BJ (cell line): ENCODE measurements at regions of chr1 and their contacts with region 1.

Region 1: GRCh38 chr1:147640553-147641165 is 29.7 kb downstream of the ACP6 start:
- DNase-seq: peak; percentile 13
- H3K4me3 ChIP-seq: no peak overlapping the region
- H3K27me3 ChIP-seq: no peaks in the 10 kb centered on the region
- CTCF ChIP-seq: peak; percentile 97

Region 2: DNA sequence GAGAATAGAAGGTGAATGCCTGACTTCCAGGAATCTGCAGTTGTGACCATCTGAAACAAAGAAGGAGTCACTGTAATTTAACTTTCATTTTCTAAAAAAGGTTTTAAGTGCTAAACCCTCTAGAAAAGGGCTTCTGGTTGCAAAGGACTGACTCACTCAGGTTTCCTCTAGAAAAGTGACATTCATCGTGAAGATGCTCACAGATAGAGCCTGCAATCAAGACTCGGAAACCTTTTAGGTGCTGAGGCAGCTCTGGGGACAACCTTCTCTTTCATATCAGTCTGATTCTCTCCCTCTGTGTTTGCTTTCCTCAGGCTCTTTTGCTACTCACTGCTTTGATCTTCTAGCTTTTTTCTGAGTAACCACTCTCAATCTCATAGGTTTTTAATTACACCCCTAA is 91.1 kb before region 1 on chr1:
- CTCF ChIA-PET with region 1: no interaction called
- POLR2A ChIA-PET with region 1: no interaction called
- DNase-seq: no peak
- H3K4me3 ChIP-seq: no peak overlapping the region
- H3K27me3 ChIP-seq: no peaks in the 10 kb centered on the region
- CTCF ChIP-seq: no peak

Region 3: DNA sequence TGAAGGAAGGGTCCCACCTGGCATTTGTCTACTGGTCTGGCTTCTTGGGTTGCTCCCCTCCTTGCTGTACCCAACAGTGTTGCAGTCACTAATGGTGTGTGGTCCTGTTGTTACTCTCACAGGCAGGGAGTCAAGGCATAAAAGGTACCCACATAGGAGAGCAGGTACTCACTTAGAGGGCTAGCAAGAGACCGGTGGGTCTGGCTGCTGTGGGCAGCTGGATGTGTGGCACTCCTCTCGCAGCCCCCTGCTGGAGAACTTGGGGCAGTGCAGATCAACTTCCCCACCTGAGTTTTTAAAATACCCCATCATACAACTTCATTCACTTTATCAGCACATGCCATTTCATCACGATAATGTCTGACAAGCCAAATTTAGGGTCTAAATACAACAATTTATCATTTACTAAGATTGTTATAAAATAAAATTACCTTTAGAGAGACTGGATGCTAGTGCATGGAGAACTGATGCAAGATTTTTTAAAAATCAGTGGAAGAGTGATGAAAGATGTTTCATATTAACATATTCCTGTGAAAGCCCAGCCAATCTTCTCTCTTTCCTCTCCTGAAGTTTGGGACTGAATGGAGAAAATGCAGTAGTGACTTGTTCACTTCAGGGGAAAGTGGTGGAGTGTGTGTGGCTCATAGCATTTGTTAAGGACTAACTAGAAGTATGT is 13.1 kb before region 1 on chr1:
- CTCF ChIA-PET with region 1: interaction called, 26 read pairs
- POLR2A ChIA-PET with region 1: no interaction called
- DNase-seq: no peak
- H3K4me3 ChIP-seq: no peak overlapping the region
- H3K27me3 ChIP-seq: no peaks in the 10 kb centered on the region
- CTCF ChIP-seq: peak; percentile 96

Region 4: GRCh38 chr1:147651213-147651865 is 10.7 kb after region 1 on chr1:
- CTCF ChIA-PET with region 1: interaction called, 13 read pairs
- POLR2A ChIA-PET with region 1: no interaction called
- DNase-seq: no peak
- H3K4me3 ChIP-seq: no peak overlapping the region
- H3K27me3 ChIP-seq: no peaks in the 10 kb centered on the region
- CTCF ChIP-seq: no peak

Region 5: DNA sequence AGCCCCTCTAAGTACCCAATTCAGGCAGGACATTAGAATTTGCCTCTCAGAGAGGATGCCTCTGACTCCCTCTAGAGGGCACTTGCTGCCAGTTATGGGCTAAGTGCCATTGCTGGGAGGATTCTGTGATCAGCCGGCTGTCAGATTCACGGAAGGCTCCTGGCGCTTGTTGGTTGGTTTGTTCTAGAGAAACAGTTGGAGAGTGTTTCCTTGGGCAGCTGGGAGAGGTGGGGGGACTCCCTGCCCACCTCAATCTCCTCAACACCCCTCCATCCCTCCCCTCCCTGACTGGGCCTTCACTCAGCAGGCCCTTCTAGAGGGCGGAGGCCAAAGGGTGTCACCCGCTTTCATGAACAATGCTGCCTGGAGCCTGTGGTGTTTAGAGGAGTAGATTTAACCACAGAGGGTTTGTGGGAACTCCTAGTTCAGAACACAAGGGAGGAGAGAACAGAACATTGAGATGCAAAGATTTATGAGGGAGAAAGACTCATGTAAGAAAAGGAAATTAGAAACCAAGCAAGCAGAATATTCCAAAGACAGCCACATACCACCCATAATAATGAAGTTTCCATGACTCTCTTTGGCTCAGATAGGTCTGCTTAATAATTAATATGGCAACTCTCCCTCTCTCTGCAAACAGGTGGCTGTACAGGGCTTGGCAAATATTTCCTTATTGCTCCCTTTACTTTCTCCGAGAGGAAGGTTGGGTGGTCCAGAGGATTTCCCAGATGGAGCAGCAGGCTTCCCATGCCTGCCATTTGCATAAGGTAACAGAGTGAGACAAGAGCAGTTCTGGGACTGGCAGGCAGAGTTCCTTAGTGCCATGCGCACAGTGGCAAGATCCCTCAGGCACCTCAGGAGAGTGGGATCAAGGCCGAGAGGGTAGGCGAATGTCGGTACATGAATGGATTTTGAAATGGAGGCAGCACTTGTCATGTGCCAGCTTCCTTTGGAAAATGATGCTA is 59.7 kb after region 1 on chr1:
- CTCF ChIA-PET with region 1: interaction called, 20 read pairs
- POLR2A ChIA-PET with region 1: no interaction called
- DNase-seq: no peak
- H3K4me3 ChIP-seq: no peak overlapping the region
- H3K27me3 ChIP-seq: no peaks in the 10 kb centered on the region
- CTCF ChIP-seq: peak; percentile 95